ENCODE measurements at regions of chr14 and their contacts with region 1.

Region 1: GRCh38 chr14:104967386-104968152 is 10.6 kb downstream of the AHNAK2 start:
- DNase-seq: no peak
- H3K4me3 ChIP-seq: peak overlapping the region; percentile 43 to 69 (median 57)
- H3K27ac ChIP-seq: peak overlapping the region; percentile 95 to 97
- H3K4me1 ChIP-seq: peaks cover 25 to 27% of the 10 kb centered on the region in 2 donors
- H3K27me3 ChIP-seq: no peaks in the 10 kb centered on the region
- CTCF ChIP-seq: no peak
- POLR2A ChIP-seq: no peak

Region 2: DNA sequence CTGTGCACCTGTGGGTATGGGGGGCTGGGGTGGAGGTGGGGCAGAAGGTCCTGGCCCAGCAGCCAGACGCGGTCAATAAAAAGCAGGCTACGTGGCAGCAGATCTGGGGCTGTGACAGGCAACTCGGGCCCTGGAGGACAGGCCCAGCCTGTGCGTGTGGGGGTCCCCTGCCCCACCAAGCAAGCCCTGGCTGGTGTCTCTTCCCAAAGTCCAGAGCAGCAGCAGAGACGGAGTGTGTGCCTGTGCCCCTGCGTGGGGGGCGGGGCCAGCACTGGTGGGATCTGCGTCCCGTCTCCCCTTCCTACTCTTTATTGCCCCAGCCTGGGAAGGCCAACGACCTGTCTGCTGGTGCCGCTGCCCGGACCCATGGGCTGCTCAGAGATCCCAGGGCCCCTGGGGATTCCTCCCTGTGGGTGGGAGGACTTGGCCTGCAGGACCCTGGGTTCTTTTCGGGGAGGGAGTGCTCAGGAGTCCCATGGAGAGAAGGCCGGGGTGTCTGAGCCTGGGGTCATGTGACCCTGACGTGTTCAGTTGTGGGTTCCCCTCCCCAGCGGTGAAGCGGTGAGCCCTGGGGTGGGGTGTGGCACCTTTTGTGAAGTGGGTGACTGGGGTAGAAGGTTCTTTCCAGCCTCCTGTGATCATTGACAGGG is 859.9 kb before region 1 on chr14:
- intact Hi-C with region 1: no loop called
- DNase-seq: peak in 1 of 2 donors; percentile 50
- H3K4me3 ChIP-seq: no peak overlapping the region
- H3K27ac ChIP-seq: no peak overlapping the region
- H3K4me1 ChIP-seq: no peaks in the 10 kb centered on the region
- H3K27me3 ChIP-seq: peaks cover 0 to 51% of the 10 kb centered on the region in 2 donors
- CTCF ChIP-seq: no peak
- POLR2A ChIP-seq: no peak

Region 3: DNA sequence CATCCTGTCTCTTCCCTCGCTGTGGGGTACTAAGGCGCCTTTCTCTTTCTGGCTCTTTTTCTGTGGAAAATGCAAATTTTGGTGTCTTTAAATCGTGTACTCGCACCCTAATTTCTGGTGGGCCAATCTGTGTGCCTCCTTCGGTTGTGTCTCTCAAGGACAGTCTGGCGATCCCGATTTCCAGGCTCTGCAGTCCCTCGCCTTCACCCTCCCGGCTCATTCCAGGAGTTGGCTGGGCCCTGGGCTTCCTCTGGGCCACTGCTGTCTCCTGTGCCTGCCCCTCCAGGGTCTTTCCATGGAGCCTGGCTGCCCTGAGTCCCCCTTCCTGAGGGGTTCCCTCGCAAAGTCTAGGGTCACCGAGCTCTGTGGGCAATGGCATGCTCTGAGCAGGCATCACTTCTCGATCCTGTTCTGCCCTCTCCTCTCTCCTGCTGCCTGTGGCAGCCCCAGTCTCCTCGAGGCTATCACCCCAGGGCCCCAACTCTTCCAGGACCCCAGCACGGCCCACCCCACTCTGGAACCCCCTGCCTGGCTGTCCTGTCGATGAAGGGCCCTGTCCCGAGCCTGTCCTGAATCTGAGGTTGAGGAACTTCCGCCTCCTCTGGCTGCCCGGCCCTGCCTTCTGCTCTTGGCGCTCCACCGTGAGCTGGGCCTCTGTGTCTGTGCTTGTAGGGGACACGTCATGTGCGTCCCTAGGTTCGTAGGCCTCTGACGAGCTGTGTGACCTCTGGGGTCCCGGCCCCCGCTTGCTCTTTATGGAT is 13.5 kb before region 1 on chr14:
- intact Hi-C with region 1: loop called (anchors 2 kb)
- DNase-seq: no peak
- H3K4me3 ChIP-seq: no peak overlapping the region
- H3K27ac ChIP-seq: no peak overlapping the region
- H3K4me1 ChIP-seq: no peaks in the 10 kb centered on the region
- H3K27me3 ChIP-seq: no peaks in the 10 kb centered on the region
- CTCF ChIP-seq: no peak
- POLR2A ChIP-seq: no peak

Region 4: GRCh38 chr14:104985675-104986525 is 18.3 kb after region 1 on chr14 and contains the start of gene CLBA1:
- intact Hi-C with region 1: no loop called
- DNase-seq: peak; percentile 86 to 88
- H3K4me3 ChIP-seq: peak within 1 kb of the TSS; percentile 61 to 81 (median 73)
- H3K27ac ChIP-seq: peak within 1 kb of the TSS; percentile 81 to 84
- H3K4me1 ChIP-seq: peaks cover 0 to 8% of the 10 kb centered on the region in 2 donors
- H3K27me3 ChIP-seq: no peaks in the 10 kb centered on the region
- CTCF ChIP-seq: no peak
- POLR2A ChIP-seq: no peak
- total RNA-seq, gene CLBA1: 4.5 to 17.0 (median 8.8) TPM